ENCODE measurements at regions of chr9 and their contacts with region 1.

Region 1: GRCh38 chr9:2620919-2621679 is 488 bp upstream of the VLDLR start:
- DNase-seq: peak; percentile 64 to 71
- H3K4me3 ChIP-seq: peak overlapping the region; percentile 74
- H3K27ac ChIP-seq: peak overlapping the region; percentile 81
- H3K4me1 ChIP-seq: 0 out of 2 replicates have a peak, but pooled peaks cover 8% of the 10 kb centered on the region
- H3K27me3 ChIP-seq: no peaks in the 10 kb centered on the region
- CTCF ChIP-seq: no peak

Region 2: DNA sequence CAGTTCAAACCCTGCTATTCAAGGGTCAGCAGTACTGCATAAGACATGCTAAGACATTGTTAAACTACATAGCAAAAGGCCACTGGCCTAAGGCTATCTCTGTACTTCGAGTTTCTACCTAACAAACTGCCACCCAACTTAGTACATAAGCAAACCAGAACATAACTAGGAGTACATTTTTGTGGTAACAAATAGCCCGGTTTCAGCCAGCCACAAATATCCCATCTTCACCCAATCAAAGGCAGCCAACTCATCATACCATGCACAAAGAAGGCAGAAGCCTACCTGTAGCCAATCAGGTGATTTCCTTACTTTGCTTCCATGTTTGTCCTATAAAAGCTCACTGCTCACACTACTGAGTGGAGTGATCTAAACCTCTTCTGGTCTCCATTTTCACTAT is 404.5 kb before region 1 on chr9:
- CTCF ChIA-PET with region 1: no interaction called
- POLR2A ChIA-PET with region 1: interaction called, 30 read pairs
- intact Hi-C with region 1: no loop called
- DNase-seq: no peak
- H3K4me3 ChIP-seq: no peak overlapping the region
- H3K27ac ChIP-seq: no peak overlapping the region
- H3K4me1 ChIP-seq: no peaks in the 10 kb centered on the region
- H3K27me3 ChIP-seq: no peaks in the 10 kb centered on the region
- CTCF ChIP-seq: no peak

Region 3: DNA sequence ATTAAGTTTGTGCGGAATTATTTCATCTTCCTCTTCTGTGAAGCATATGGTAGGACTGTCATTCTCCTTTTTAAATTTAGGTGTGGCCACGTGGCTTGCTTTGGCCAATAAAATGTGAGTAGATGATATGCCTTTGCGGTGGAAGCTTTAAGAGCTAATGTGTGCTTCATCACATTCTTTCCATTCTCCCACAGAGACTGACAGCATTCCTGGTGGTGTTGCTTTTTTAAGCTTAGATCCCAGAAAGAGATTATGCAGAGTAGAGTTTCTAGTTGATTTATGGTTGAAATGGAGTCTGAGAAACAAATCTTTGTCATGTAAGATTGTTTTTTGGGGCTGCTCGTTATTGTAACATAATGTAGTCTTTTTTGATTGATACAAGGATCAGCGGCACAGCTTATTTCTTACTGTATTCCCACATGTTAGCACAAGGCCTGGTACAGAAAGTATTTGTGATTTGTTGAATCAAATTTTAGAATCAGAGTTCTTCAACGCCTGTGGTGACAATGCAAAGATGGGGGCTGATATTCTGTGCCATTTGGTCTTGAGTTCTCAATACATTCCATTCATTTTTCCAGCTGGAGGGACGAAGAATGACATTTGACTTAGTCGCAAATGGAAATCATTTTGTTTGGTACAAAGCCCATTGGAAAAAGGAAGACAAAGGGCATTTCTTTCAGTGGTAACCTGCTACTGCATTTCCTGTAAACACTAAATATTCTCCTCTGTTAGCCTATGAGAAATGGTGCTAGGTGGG is 209.5 kb before region 1 on chr9:
- CTCF ChIA-PET with region 1: no interaction called
- POLR2A ChIA-PET with region 1: no interaction called
- intact Hi-C with region 1: loop called (anchors 5 kb)
- DNase-seq: peak; percentile 18 to 38
- H3K4me3 ChIP-seq: no peak overlapping the region
- H3K27ac ChIP-seq: no peak overlapping the region
- H3K4me1 ChIP-seq: no peaks in the 10 kb centered on the region
- H3K27me3 ChIP-seq: no peaks in the 10 kb centered on the region
- CTCF ChIP-seq: no peak

Region 4: DNA sequence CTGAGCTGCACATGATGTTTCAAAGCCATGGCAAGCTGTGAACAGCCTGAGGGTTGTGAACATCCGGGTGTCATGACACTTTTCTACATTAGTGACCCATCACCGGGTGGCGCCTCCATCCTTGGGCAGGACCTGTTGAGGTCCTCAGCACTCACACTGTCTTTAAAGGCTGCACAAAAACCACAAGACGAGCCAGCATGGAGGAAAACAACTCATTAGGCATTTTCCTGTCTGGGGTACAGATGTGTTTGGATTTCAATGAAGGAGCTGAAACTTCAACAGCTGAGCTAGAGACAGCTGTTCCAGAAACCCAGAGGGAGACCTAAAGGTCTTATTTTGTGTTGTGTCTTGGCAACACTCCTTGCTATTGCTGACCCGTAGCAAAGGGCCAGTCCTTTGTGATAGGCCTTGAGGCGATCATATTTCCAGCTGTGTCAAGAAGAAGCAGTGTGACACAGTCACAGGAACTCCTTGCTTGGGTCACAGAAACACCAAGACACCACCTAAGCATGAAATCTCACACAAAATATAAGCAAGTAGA is 151.3 kb before region 1 on chr9:
- CTCF ChIA-PET with region 1: no interaction called
- POLR2A ChIA-PET with region 1: no interaction called
- intact Hi-C with region 1: loop called (anchors 5 kb)
- DNase-seq: peak in 1 of 2 experiments; percentile 22
- H3K4me3 ChIP-seq: no peak overlapping the region
- H3K27ac ChIP-seq: no peak overlapping the region
- H3K4me1 ChIP-seq: peaks cover 16% of the 10 kb centered on the region
- H3K27me3 ChIP-seq: no peaks in the 10 kb centered on the region
- CTCF ChIP-seq: no peak; the same call in 1 of the 2 replicates

Region 5: GRCh38 chr9:2570615-2571479 is 50.3 kb before region 1 on chr9:
- CTCF ChIA-PET with region 1: no interaction called
- POLR2A ChIA-PET with region 1: no interaction called
- intact Hi-C with region 1: loop called (anchors 5 kb)
- DNase-seq: peak; percentile 90 to 97
- H3K4me3 ChIP-seq: no peak overlapping the region; the same call in 1 of the 2 replicates
- H3K27ac ChIP-seq: peak overlapping the region; percentile 77
- H3K4me1 ChIP-seq: peaks cover 61% of the 10 kb centered on the region
- H3K27me3 ChIP-seq: no peaks in the 10 kb centered on the region
- CTCF ChIP-seq: no peak

Region 6: GRCh38 chr9:2602704-2603116 is 18.4 kb before region 1 on chr9:
- CTCF ChIA-PET with region 1: no interaction called
- POLR2A ChIA-PET with region 1: no interaction called
- intact Hi-C with region 1: no loop called
- DNase-seq: peak; percentile 8 to 83
- H3K4me3 ChIP-seq: no peak overlapping the region
- H3K27ac ChIP-seq: peak overlapping the region; percentile 35; the same call in 1 of the 2 replicates
- H3K4me1 ChIP-seq: peaks cover 24% of the 10 kb centered on the region
- H3K27me3 ChIP-seq: no peaks in the 10 kb centered on the region
- CTCF ChIP-seq: no peak